PC-3 (cell line): ENCODE measurements at regions of chr16 and their contacts with region 1.

Region 1: GRCh38 chr16:4968879-4969456 is 10.8 kb downstream of the SEC14L5 start:
- DNase-seq: no peak
- ATAC-seq: no peak
- H3K4me3 ChIP-seq: no peak overlapping the region
- H3K27ac ChIP-seq: no peak overlapping the region
- H3K4me1 ChIP-seq: no peaks in the 10 kb centered on the region
- H3K27me3 ChIP-seq: no peaks in the 10 kb centered on the region
- CTCF ChIP-seq: no peak

Region 2: DNA sequence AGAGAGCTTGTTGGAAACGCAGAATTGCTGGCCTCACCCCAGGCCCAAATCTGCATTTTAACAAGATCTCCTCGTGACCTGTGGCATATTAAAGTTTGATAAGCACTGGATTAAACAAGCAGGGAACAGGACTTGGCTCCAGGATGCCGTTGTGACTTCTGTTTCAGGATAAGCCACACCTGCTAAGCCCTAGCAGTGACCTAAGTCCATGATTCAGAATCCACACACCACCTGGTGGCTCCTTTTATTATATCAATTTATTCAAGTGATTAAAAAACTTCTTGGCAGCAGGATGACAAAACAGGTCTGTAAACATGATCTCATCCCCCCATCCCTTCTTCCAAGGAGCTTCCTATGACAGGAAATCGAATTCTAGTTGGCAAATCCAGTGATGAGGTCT is 55.7 kb after region 1 on chr16:
- CTCF ChIA-PET with region 1: no interaction called
- POLR2A ChIA-PET with region 1: no interaction called
- intact Hi-C with region 1: loop called (anchors 5 kb)
- DNase-seq: peak; percentile 82
- ATAC-seq: peak; percentile 91
- H3K4me3 ChIP-seq: no peak overlapping the region
- H3K27ac ChIP-seq: no peak overlapping the region
- H3K4me1 ChIP-seq: peaks cover 9% of the 10 kb centered on the region
- H3K27me3 ChIP-seq: no peaks in the 10 kb centered on the region
- CTCF ChIP-seq: peak; percentile 51